PC-9 (cell line): ENCODE measurements at regions of chr5 and their contacts with region 1.

Region 1: DNA sequence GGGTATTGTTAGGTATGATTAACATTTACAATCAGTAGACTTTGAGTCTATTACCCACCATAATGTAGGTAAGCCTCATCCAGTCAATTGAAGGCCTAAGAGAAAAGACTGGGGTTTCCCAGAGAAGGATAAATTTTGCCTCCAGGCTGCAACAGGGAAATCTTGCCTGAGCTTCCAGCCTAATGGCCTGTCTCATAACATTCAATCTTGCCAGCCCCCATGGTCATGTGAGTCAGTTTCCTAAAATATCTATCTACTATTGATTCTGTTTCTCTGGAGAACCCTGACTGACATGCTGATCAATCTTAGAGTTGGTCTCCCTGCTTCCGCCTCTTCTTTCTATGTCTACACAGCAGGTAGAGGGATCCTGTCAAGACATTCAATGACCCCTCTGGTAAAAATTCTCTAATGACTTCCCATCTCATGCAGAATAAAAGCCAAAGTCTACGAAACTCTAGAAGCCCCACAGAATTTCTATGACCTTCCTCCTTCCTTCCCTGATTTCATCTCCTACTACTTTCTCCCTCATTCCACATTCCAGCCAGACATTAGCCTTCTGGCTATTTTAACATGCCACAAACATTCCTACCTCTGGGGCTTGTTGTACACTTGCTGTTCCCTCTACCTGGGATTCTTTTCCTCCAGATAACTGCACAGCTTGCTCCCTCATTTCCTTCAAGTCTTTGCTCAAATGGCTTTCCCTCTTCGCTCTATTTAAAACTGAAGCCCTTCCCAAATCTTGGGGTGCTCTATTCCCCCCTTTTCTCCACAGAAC is 60.3 kb downstream of the FBXW11 start:
- DNase-seq: peak; percentile 11 to 42
- H3K4me3 ChIP-seq: no peak overlapping the region
- H3K27ac ChIP-seq: no peak overlapping the region
- H3K4me1 ChIP-seq: peaks cover 20% of the 10 kb centered on the region
- H3K27me3 ChIP-seq: no peaks in the 10 kb centered on the region
- CTCF ChIP-seq: no peak

Region 2: GRCh38 chr5:171957591-171958251 is 11.5 kb after region 1 on chr5:
- CTCF ChIA-PET with region 1: no interaction called
- POLR2A ChIA-PET with region 1: no interaction called
- intact Hi-C with region 1: no loop called
- DNase-seq: no peak
- H3K4me3 ChIP-seq: no peak overlapping the region
- H3K27ac ChIP-seq: no peak overlapping the region
- H3K4me1 ChIP-seq: peaks cover 37% of the 10 kb centered on the region
- H3K27me3 ChIP-seq: no peaks in the 10 kb centered on the region
- CTCF ChIP-seq: no peak

Region 3: GRCh38 chr5:172006321-172007174 is 60.4 kb after region 1 on chr5 and contains the start of gene FBXW11:
- CTCF ChIA-PET with region 1: interaction called, 3 read pairs
- POLR2A ChIA-PET with region 1: interaction called, 7 read pairs
- intact Hi-C with region 1: loop called (anchors 2 kb)
- DNase-seq: peak; percentile 95 to 96
- H3K4me3 ChIP-seq: peak within 1 kb of the TSS; percentile 86
- H3K27ac ChIP-seq: peak within 1 kb of the TSS; percentile 68
- H3K4me1 ChIP-seq: peaks cover 29% of the 10 kb centered on the region
- H3K27me3 ChIP-seq: no peaks in the 10 kb centered on the region
- CTCF ChIP-seq: no peak
- total RNA-seq, gene FBXW11: 54.8 and 58.7 TPM in 2 replicates

Region 4: GRCh38 chr5:172902497-172903200 is 956.5 kb after region 1 on chr5:
- CTCF ChIA-PET with region 1: no interaction called
- POLR2A ChIA-PET with region 1: no interaction called
- intact Hi-C with region 1: no loop called
- DNase-seq: peak; percentile 79 to 97
- H3K4me3 ChIP-seq: no peak overlapping the region
- H3K27ac ChIP-seq: peak overlapping the region; percentile 99
- H3K4me1 ChIP-seq: peaks cover 51% of the 10 kb centered on the region
- H3K27me3 ChIP-seq: no peaks in the 10 kb centered on the region
- CTCF ChIP-seq: peak; percentile 72